Activated CD4-positive, alpha-beta T cell treated with anti-CD3 and anti-CD28 coated beads for 36 hours (primary cell): ENCODE measurements at regions of chr20 and their contacts with region 1.

Region 1: GRCh38 chr20:10596726-10597125 is 77.1 kb downstream of the JAG1 start:
- DNase-seq: no peak
- ATAC-seq: no peak
- H3K4me3 Mint-ChIP-seq: no peak overlapping the region
- H3K27ac Mint-ChIP-seq: no peak overlapping the region
- H3K4me1 Mint-ChIP-seq: peaks cover 17% of the 10 kb centered on the region
- H3K27me3 Mint-ChIP-seq: no peaks in the 10 kb centered on the region

Region 2: GRCh38 chr20:10350188-10350842 is 246.4 kb before region 1 on chr20:
- CTCF ChIA-PET with region 1: no interaction called
- POLR2A ChIA-PET with region 1: no interaction called
- intact Hi-C with region 1: loop called in 1 of 2 experiments (anchors 2 kb)
- DNase-seq: no peak
- ATAC-seq: no peak
- H3K4me3 Mint-ChIP-seq: peak overlapping the region; percentile 4
- H3K27ac Mint-ChIP-seq: peak overlapping the region; percentile 84
- H3K4me1 Mint-ChIP-seq: peaks cover 28% of the 10 kb centered on the region
- H3K27me3 Mint-ChIP-seq: peaks cover 2% of the 10 kb centered on the region

Region 3: DNA sequence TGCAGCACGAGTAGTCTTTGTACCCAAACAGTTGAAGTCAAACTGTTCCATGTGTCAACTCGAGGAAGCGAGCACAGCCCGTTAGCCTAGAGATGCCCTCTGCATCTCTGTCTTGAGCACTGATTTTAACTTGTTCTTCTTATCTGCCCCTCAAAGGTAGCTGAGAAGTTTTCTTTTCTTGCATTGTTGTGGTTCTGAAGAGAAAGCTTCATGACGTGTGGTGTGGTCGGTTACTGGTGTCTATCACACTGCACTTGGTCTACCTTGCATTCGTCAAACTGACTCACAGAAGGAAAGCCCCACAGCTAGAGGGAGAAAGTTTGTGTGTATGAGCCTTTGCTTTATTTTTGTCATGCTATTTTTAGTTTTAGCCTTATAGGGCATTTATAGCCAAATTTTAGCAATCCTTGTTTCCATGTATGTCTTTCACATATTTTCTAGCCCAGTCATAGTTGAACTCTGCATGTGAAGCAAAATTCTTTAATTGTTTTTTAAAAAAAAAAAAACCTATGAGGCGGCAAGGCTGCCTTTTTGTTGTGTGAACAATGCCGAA is 38.0 kb before region 1 on chr20:
- CTCF ChIA-PET with region 1: interaction called, 3 read pairs
- POLR2A ChIA-PET with region 1: interaction called, 3 read pairs
- intact Hi-C with region 1: loop called (anchors 1 to 2 kb)
- DNase-seq: peak; percentile 75
- ATAC-seq: peak; percentile 99
- H3K4me3 Mint-ChIP-seq: no peak overlapping the region
- H3K27ac Mint-ChIP-seq: no peak overlapping the region
- H3K4me1 Mint-ChIP-seq: peaks cover 22% of the 10 kb centered on the region
- H3K27me3 Mint-ChIP-seq: no peaks in the 10 kb centered on the region

Region 4: DNA sequence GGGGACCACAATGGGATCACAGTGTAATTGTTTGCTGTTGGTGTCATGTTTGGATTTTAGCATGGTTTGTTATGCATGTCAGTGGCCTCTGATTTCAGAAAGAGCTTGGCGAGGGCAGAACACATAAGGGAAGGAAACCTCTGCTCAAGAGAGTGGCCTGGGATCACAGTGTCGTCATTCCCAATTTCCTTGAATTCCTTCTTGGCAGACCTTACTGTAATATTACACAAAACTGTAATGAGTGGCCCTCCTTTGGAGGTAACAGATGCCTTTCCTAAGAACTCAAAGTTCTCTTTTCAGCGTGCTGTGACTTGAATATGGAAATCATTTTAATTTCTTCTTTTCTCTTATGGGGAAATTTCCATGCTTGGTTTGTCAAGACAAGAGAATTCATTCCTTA is 30.2 kb after region 1 on chr20:
- CTCF ChIA-PET with region 1: no interaction called
- POLR2A ChIA-PET with region 1: no interaction called
- intact Hi-C with region 1: no loop called
- DNase-seq: no peak
- ATAC-seq: no peak
- H3K4me3 Mint-ChIP-seq: no peak overlapping the region
- H3K27ac Mint-ChIP-seq: no peak overlapping the region
- H3K4me1 Mint-ChIP-seq: no peaks in the 10 kb centered on the region
- H3K27me3 Mint-ChIP-seq: no peaks in the 10 kb centered on the region

Region 5: DNA sequence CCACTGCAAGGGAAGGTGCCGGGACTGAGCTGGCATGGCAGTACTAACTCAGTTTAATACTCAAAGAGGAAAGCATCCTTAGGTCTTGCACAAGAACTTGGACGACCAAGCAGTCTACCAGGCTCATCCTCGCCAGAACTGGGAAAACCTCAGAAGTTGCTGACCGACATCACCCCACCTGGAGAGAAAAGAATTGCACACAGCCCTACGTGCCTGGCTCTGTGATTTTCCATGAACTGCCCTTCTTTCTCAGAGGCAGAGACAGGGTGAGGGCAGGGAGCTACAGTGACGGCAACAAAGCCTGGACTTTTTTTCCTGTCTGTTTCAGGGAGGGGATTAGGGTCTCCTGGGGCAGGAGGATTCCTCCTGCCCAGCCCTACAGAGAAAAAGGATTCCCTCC is 69.1 kb after region 1 on chr20:
- CTCF ChIA-PET with region 1: no interaction called
- POLR2A ChIA-PET with region 1: no interaction called
- intact Hi-C with region 1: no loop called
- DNase-seq: no peak
- ATAC-seq: no peak
- H3K4me3 Mint-ChIP-seq: no peak overlapping the region
- H3K27ac Mint-ChIP-seq: no peak overlapping the region
- H3K4me1 Mint-ChIP-seq: peaks cover 1% of the 10 kb centered on the region
- H3K27me3 Mint-ChIP-seq: peaks cover 39% of the 10 kb centered on the region